SK-N-SH (cell line): ENCODE measurements at regions of chr5 and their contacts with region 1.

Region 1: GRCh38 chr5:15807871-15808270 is 307.9 kb downstream of the FBXL7 start:
- DNase-seq: peak; percentile 72
- H3K4me3 ChIP-seq: peak overlapping the region in 1 of 2 experiments; percentile 11; a peak in 1 of 4 replicates
- H3K27ac ChIP-seq: peak overlapping the region; percentile 35 to 85; a peak in 3 of 4 replicates
- H3K4me1 ChIP-seq: peaks cover 14 to 23% of the 10 kb centered on the region in 2 experiments; a peak in 3 of 4 replicates
- H3K27me3 ChIP-seq: no peaks in the 10 kb centered on the region
- CTCF ChIP-seq: peak; percentile 46
- EP300 ChIP-seq: peak in 1 of 2 experiments; percentile 44; a peak in 2 of 4 replicates
- RAD21 ChIP-seq: peak; percentile 77

Region 2: GRCh38 chr5:15834596-15835245 is 26.9 kb after region 1 on chr5:
- CTCF ChIA-PET with region 1: no interaction called
- POLR2A ChIA-PET with region 1: no interaction called
- DNase-seq: no peak
- H3K4me3 ChIP-seq: no peak overlapping the region
- H3K27ac ChIP-seq: peak overlapping the region; percentile 50 to 70
- H3K4me1 ChIP-seq: peaks cover 13 to 17% of the 10 kb centered on the region in 2 experiments; a peak in 3 of 4 replicates
- H3K27me3 ChIP-seq: no peaks in the 10 kb centered on the region
- CTCF ChIP-seq: no peak
- EP300 ChIP-seq: peak in 1 of 2 experiments; percentile 46; a peak in 1 of 4 replicates
- RAD21 ChIP-seq: no peak

Region 3: DNA sequence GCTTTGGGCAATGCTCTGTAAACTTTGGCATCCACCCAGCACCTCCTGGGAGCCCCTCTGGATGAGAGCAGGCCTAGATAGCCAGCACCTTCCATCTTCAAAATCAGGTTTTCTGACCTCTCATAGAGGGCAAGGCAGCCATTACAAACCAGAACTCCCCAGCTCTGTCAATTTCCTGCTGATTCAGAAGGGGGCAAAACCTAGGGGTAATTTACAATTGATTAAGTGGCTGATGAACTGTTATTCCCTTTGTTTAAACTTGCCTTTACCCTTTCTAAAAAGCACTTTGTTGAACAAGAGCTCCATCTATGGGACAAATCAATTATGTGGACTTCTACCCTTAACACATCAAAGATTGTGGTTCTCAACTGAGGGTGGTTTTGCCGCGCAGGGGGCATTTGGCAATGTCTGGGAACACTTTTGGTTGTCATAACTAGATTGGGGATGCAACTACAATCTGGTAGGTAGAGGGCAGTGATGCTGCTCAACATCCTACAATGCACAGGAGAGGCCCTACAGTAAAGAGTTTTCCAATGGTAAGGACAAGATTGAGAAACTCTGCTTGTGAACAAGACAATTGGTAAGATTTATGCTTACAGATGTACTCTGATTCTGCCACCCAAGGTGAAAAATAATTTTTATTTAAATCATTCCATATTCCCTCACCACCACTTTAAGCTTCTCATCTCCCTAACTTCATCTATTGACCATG is 187.6 kb after region 1 on chr5:
- CTCF ChIA-PET with region 1: interaction called, 10 read pairs
- POLR2A ChIA-PET with region 1: no interaction called
- DNase-seq: peak; percentile 5
- H3K4me3 ChIP-seq: no peak overlapping the region
- H3K27ac ChIP-seq: peak overlapping the region in 1 of 2 experiments; percentile 36; a peak in 2 of 4 replicates
- H3K4me1 ChIP-seq: peaks cover 0 to 4% of the 10 kb centered on the region in 2 experiments; a peak in 2 of 4 replicates
- H3K27me3 ChIP-seq: no peaks in the 10 kb centered on the region
- CTCF ChIP-seq: peak; percentile 72
- EP300 ChIP-seq: no peak
- RAD21 ChIP-seq: peak; percentile 75

Region 4: GRCh38 chr5:16082053-16082452 is 274.2 kb after region 1 on chr5:
- CTCF ChIA-PET with region 1: no interaction called
- POLR2A ChIA-PET with region 1: no interaction called
- DNase-seq: no peak
- H3K4me3 ChIP-seq: no peak overlapping the region
- H3K27ac ChIP-seq: no peak overlapping the region
- H3K4me1 ChIP-seq: peaks cover 0 to 13% of the 10 kb centered on the region in 2 experiments; a peak in 2 of 4 replicates
- H3K27me3 ChIP-seq: no peaks in the 10 kb centered on the region
- CTCF ChIP-seq: no peak
- EP300 ChIP-seq: no peak
- RAD21 ChIP-seq: no peak

Region 5: DNA sequence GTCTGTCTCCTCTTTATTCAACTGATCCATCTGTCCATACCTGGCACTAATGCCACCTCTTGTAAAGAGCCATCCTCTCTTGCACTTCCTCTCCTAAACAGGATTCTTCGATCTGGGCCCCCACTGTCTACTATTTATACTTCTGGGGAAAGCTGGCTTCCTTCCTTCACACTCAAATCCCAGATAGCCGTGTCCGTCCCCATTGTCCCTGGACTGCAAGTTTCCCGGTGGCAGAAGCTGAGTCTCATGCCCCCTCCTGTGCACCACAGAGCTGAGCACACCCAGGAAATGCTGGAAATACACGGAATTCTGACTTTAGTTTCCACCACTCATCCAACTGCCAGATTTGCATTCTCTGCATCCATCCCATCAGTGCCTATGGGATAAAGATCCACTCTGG is 287.7 kb after region 1 on chr5:
- CTCF ChIA-PET with region 1: no interaction called
- POLR2A ChIA-PET with region 1: no interaction called
- DNase-seq: no peak
- H3K4me3 ChIP-seq: no peak overlapping the region
- H3K27ac ChIP-seq: no peak overlapping the region; a peak in 1 of 4 replicates
- H3K4me1 ChIP-seq: peaks cover 0 to 20% of the 10 kb centered on the region in 2 experiments; a peak in 2 of 4 replicates
- H3K27me3 ChIP-seq: no peaks in the 10 kb centered on the region
- CTCF ChIP-seq: no peak
- EP300 ChIP-seq: no peak
- RAD21 ChIP-seq: no peak